ENCODE measurements at regions of chr16 and their contacts with region 1.

Region 1: GRCh38 chr16:84720177-84720579 is 20.4 kb downstream of the USP10 start:
- DNase-seq: no peak
- H3K4me3 Mint-ChIP-seq: no peak overlapping the region
- H3K27ac Mint-ChIP-seq: no peak overlapping the region
- H3K4me1 Mint-ChIP-seq: peaks cover 63% of the 10 kb centered on the region
- H3K27me3 Mint-ChIP-seq: no peaks in the 10 kb centered on the region

Region 2: DNA sequence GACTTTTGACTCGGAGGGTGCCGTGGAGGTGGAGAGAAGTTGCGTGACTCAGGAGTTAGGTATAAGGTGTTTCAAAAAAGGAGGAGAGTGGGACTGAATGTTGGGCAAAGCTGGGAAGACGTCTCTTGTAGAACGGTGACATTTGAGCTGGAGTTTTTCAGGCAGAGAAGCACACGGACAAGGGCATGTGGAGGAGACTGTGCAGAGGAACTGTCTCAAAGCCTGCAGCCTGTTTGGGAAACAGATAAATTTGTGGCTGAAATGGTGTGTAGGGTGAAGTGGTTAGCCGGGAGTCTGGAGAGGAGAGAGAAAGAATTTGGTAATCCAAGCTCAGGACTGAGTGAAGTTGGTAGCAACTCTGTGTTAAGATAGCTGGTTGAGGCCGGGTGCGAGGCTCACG is 10.6 kb before region 1 on chr16:
- CTCF ChIA-PET with region 1: interaction called, 10 read pairs
- POLR2A ChIA-PET with region 1: no interaction called
- DNase-seq: no peak
- H3K4me3 Mint-ChIP-seq: no peak overlapping the region
- H3K27ac Mint-ChIP-seq: no peak overlapping the region
- H3K4me1 Mint-ChIP-seq: peaks cover 43% of the 10 kb centered on the region
- H3K27me3 Mint-ChIP-seq: no peaks in the 10 kb centered on the region

Region 3: GRCh38 chr16:84754353-84754856 is 34.2 kb after region 1 on chr16:
- CTCF ChIA-PET with region 1: no interaction called
- POLR2A ChIA-PET with region 1: no interaction called
- DNase-seq: peak; percentile 89
- H3K4me3 Mint-ChIP-seq: peak overlapping the region; percentile 25
- H3K27ac Mint-ChIP-seq: peak overlapping the region; percentile 27
- H3K4me1 Mint-ChIP-seq: peaks cover 75% of the 10 kb centered on the region
- H3K27me3 Mint-ChIP-seq: no peaks in the 10 kb centered on the region

Region 4: GRCh38 chr16:84774810-84775209 is 54.6 kb after region 1 on chr16:
- CTCF ChIA-PET with region 1: no interaction called
- POLR2A ChIA-PET with region 1: no interaction called
- DNase-seq: no peak
- H3K4me3 Mint-ChIP-seq: no peak overlapping the region
- H3K27ac Mint-ChIP-seq: no peak overlapping the region
- H3K4me1 Mint-ChIP-seq: peaks cover 4% of the 10 kb centered on the region
- H3K27me3 Mint-ChIP-seq: no peaks in the 10 kb centered on the region

Region 5: GRCh38 chr16:84785843-84786581 is 65.8 kb after region 1 on chr16:
- CTCF ChIA-PET with region 1: no interaction called
- POLR2A ChIA-PET with region 1: no interaction called
- DNase-seq: no peak
- H3K4me3 Mint-ChIP-seq: no peak overlapping the region
- H3K27ac Mint-ChIP-seq: no peak overlapping the region
- H3K4me1 Mint-ChIP-seq: no peaks in the 10 kb centered on the region
- H3K27me3 Mint-ChIP-seq: no peaks in the 10 kb centered on the region

Measured in activated CD4-positive, alpha-beta T cell treated with anti-CD3 and anti-CD28 coated beads, Interleukin-2, amount 10 ng/mL, durations not matched to agents 7 days and 5 days (primary cell).